Aorta (tissue), 5 donors: ENCODE measurements at regions of chr11 and their contacts with region 1.

Region 1: GRCh38 chr11:86456052-86456939 is 81.6 kb downstream of the CCDC81 start:
- DNase-seq: peak; percentile 86 to 93
- ATAC-seq: peak; percentile 84
- H3K4me3 ChIP-seq: no peak overlapping the region
- H3K27ac ChIP-seq: peak overlapping the region in 1 of 2 donors; percentile 3
- H3K4me1 ChIP-seq: peaks cover 0 to 15% of the 10 kb centered on the region in 2 donors
- H3K27me3 ChIP-seq: no peaks in the 10 kb centered on the region

Region 2: DNA sequence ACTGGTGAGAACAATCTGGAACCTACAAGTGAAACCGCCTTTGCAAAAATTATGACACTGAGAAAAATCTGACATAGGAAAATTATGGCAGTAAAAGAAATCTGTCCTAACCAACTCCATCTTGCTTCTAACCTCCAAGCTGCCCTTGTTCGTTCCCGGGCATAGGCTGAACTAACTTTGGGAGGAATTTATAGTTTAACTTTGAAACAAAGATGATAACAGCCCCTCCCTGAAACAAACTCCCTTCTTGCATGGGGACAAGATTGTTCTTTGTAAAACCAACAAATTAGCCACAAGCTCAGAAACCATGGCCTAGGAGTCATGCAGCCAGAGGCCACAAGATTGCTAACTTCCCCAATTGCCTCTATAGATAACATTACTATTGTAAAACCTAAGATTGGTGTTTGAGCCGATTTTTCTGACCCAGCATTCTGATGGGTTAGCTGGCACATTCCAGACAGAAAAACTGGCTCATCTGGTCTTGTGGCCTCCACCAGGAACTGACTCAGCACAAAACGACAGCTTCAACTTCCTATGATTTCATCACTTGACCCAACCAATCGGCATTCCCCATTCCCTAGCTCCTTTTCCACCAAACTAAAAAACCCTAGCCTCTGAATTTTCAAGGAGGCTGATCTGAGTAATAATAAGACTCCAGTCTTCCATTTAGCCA is 85.2 kb before region 1 on chr11:
- intact Hi-C with region 1: no loop called
- DNase-seq: no peak
- ATAC-seq: no peak
- H3K4me3 ChIP-seq: no peak overlapping the region
- H3K27ac ChIP-seq: no peak overlapping the region
- H3K4me1 ChIP-seq: no peaks in the 10 kb centered on the region
- H3K27me3 ChIP-seq: no peaks in the 10 kb centered on the region

Region 3: DNA sequence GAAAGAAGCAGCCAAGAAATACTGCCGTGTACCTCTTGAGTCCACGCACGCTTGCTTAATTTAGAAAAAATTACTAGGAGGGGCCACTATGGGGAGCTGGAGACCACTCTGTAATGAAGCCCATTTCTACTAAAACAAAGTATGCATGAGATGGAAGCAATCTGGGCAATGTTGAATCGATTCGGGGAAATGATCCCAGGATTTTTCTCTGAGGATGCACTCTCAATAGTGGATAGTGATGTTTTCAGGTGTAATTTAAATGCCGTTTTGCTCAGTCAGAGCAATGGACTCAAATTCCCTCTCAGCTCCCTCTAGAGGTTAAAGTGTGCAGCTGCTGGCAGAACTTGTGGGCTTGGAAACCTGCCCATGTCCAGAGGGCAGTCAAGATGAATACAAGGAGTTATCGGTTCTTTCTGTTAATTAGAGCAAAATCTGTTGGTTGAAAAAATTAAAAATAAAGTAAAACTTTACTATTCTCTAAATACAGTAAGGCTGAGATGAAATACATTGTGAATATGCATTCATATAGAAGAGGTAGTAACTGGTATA is 152.0 kb after region 1 on chr11:
- intact Hi-C with region 1: loop called (anchors 2 kb)
- DNase-seq: peak; percentile 67 to 84
- ATAC-seq: peak; percentile 91
- H3K4me3 ChIP-seq: peak overlapping the region in 1 of 2 donors; percentile 41
- H3K27ac ChIP-seq: no peak overlapping the region
- H3K4me1 ChIP-seq: peaks cover 2 to 3% of the 10 kb centered on the region in 2 donors
- H3K27me3 ChIP-seq: no peaks in the 10 kb centered on the region

Region 4: GRCh38 chr11:86818466-86819192 is 362.3 kb after region 1 on chr11:
- intact Hi-C with region 1: loop called (anchors 2 kb)
- DNase-seq: no peak
- ATAC-seq: peak; percentile 66
- H3K4me3 ChIP-seq: no peak overlapping the region
- H3K27ac ChIP-seq: no peak overlapping the region
- H3K4me1 ChIP-seq: peaks cover 3 to 8% of the 10 kb centered on the region in 2 donors
- H3K27me3 ChIP-seq: no peaks in the 10 kb centered on the region

Region 5: DNA sequence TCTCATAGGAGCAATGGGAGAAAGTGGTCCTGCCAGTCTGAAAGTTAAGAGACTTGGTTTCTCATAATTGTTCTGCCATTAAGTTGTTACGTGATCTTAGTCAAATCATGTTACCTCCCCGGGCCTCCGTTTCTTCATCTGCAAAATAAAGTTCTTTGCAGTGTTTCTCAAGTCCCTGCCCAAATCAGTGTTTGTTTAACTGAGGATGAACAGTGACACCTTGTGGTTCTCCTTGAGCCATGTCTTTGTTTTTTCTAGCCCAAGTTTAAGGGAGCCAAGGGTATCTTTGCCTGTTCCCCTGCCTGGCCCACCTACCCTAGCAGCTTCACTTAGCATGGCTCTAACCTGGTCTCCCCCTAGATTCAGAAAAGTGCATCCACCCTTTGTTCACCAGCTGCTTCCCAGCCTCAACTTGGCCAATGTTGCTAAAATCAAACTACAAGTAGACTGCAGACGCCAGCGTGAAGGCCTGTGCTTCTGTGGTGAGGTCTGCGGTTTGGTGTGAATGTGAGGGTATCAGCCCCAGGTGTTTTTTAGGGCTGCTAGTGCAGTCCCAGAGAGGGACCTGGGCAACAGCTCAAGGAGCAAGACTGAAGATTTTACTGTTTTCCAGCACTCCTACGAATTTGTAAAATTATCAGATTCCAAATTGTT is 463.4 kb after region 1 on chr11:
- intact Hi-C with region 1: loop called (anchors 10 kb)
- DNase-seq: no peak
- ATAC-seq: peak; percentile 67
- H3K4me3 ChIP-seq: no peak overlapping the region
- H3K27ac ChIP-seq: peak overlapping the region; percentile 87 to 97
- H3K4me1 ChIP-seq: peaks cover 2 to 5% of the 10 kb centered on the region in 2 donors
- H3K27me3 ChIP-seq: no peaks in the 10 kb centered on the region